Activated naive CD4-positive, alpha-beta T cell treated with anti-CD3 and anti-CD28 coated beads for 36 hours (primary cell): ENCODE measurements at regions of chr13 and their contacts with region 1.

Region 1: GRCh38 chr13:95834134-95834765 is 157.3 kb downstream of the DNAJC3 start:
- DNase-seq: peak; percentile 77
- H3K4me3 Mint-ChIP-seq: no peak overlapping the region
- H3K27ac Mint-ChIP-seq: no peak overlapping the region
- H3K4me1 Mint-ChIP-seq: no peaks in the 10 kb centered on the region
- H3K27me3 Mint-ChIP-seq: peaks cover 22% of the 10 kb centered on the region

Region 2: DNA sequence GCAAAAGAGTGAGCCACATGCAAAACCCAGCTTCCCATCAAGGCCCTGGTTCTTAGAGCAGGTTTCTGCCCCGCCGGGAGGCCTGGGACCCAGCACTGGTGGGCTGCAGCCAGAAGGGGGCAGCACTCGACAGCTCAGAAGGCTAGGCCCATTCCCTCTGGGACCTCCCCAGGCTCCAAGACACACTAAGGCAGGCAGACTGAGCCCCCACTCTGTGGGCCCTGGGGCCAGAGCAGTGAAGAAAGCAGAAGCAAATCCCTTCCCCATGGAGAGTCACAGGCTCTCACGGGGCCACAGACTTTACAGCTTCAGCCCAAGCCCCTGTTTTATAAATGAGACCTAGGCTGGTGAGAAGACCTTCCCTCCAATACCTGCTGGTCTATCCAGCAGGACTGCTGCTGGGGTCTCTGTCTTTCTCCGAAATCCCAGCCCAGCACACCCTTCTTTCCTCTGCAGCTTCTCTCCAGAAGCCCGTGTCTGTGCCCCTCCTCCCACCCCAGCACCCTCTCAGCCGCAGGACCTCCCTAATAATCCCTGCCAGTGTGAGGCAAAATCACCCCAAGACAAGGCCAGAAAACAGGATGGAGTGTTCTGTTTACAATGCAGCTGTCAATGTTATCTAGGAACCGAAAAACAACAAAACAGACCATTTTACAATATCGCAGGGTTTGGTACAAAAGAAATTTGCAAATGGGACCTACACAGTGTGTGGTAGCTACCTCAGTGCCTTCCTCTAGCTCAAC is 642.3 kb before region 1 on chr13:
- CTCF ChIA-PET with region 1: no interaction called
- intact Hi-C with region 1: loop called (anchors 1 kb)
- DNase-seq: peak; percentile 82
- H3K4me3 Mint-ChIP-seq: no peak overlapping the region
- H3K27ac Mint-ChIP-seq: no peak overlapping the region
- H3K4me1 Mint-ChIP-seq: peaks cover 5% of the 10 kb centered on the region
- H3K27me3 Mint-ChIP-seq: no peaks in the 10 kb centered on the region

Region 3: GRCh38 chr13:95480131-95480545 is 354.1 kb before region 1 on chr13:
- CTCF ChIA-PET with region 1: interaction called, 5 read pairs
- intact Hi-C with region 1: loop called (anchors 5 kb)
- DNase-seq: peak; percentile 27
- H3K4me3 Mint-ChIP-seq: no peak overlapping the region
- H3K27ac Mint-ChIP-seq: no peak overlapping the region
- H3K4me1 Mint-ChIP-seq: peaks cover 10% of the 10 kb centered on the region
- H3K27me3 Mint-ChIP-seq: peaks cover 3% of the 10 kb centered on the region

Region 4: DNA sequence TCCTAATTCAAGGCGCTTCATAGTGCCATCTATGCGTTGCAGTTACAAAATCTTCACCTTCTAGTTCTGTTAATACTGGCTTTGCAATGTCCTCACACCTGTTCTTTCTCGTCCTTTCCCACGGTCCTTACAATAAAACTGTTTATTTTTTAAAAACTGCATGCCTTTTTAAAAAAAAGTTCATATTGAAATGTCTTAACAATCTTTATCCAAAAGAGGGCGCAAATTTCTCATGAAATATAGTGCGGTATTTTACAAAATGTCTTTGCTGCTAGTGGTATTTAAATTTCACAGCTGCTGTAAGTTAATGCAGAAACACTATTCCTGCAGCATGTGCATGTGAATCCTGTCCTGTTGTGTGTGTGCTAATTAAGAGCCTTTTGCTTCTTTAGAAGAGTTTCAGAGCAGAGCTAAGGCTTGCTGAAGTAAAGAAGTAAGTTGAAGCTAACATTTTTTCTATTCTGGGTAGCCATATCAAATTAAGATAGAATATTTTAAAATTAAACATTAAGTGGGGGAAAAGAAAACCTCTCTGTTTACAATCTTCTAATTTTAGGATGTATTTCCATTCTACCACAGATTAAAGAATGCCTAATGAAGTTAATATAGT is 297.5 kb before region 1 on chr13:
- CTCF ChIA-PET with region 1: interaction called, 45 read pairs
- intact Hi-C with region 1: loop called (anchors 1 kb)
- DNase-seq: no peak
- H3K4me3 Mint-ChIP-seq: no peak overlapping the region
- H3K27ac Mint-ChIP-seq: no peak overlapping the region
- H3K4me1 Mint-ChIP-seq: peaks cover 5% of the 10 kb centered on the region
- H3K27me3 Mint-ChIP-seq: peaks cover 26% of the 10 kb centered on the region

Region 5: DNA sequence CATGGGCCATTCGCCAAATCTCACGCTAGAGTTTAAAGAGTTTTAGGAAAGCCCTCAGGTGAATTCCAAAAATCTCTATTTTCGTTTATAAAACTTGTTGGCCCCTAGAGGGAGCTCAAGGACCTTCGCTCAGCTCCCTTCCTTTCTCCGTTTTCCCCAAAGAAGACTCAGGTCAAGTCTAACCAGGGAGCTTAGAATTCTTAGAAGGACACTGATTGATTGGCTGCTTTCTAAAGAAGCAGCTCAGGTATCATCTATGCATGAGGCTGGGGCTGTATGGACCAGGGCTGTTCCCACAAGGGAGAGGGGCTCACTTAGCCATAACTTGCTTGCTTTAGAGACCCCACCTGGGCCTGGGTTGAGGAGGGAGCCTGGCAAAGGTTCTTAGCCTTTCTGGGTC is 210.2 kb before region 1 on chr13:
- CTCF ChIA-PET with region 1: interaction called, 144 read pairs
- intact Hi-C with region 1: loop called (anchors 1 kb)
- DNase-seq: peak; percentile 39
- H3K4me3 Mint-ChIP-seq: no peak overlapping the region
- H3K27ac Mint-ChIP-seq: no peak overlapping the region
- H3K4me1 Mint-ChIP-seq: no peaks in the 10 kb centered on the region
- H3K27me3 Mint-ChIP-seq: peaks cover 14% of the 10 kb centered on the region

Region 6: DNA sequence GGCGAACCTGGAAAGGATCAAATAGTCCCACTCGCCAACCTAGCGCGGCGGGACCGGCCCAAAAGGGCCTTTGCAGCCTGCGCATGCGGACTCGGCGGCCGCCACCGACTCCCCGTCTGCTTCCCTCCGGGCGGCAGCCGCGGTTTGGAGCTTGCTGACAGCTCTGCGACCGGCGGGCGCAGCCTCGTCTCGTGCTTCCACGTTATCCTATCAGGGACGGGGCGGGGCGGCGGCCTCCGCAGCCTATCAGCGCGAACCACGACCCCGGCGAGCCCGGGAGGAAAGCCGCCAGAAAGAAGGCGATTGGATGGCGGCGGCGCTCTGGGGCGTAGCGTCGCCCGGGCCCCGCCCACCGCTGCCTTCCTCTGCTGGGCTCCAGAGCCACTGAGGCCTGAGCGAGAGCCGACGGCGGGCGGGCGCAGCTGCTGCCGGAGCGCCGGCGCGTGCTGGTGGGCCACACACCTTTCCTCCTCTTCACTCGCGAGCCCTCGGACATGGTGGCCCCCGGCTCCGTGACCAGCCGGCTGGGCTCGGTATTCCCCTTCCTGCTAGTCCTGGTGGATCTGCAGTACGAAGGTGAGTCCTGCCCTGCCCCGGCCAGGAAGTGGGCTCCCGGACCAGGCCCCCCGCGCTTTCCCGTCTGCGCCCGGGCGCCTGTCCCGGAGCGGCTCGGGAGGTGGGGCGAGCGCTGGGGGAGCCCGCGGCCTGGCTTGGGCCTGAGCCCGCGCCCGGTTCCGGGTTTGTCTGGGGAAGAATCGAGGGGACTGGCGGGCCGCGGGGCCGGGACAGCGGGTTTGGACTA is 157.3 kb before region 1 on chr13 and contains the start of gene DNAJC3:
- CTCF ChIA-PET with region 1: no interaction called
- intact Hi-C with region 1: loop called (anchors 1 kb)
- DNase-seq: peak; percentile 98
- H3K4me3 Mint-ChIP-seq: peak within 1 kb of the TSS; percentile 93
- H3K27ac Mint-ChIP-seq: peak within 1 kb of the TSS; percentile 86
- H3K4me1 Mint-ChIP-seq: peaks cover 53% of the 10 kb centered on the region
- H3K27me3 Mint-ChIP-seq: no peaks in the 10 kb centered on the region
- total RNA-seq, gene DNAJC3: 13.8 to 14.0 TPM

Region 7: DNA sequence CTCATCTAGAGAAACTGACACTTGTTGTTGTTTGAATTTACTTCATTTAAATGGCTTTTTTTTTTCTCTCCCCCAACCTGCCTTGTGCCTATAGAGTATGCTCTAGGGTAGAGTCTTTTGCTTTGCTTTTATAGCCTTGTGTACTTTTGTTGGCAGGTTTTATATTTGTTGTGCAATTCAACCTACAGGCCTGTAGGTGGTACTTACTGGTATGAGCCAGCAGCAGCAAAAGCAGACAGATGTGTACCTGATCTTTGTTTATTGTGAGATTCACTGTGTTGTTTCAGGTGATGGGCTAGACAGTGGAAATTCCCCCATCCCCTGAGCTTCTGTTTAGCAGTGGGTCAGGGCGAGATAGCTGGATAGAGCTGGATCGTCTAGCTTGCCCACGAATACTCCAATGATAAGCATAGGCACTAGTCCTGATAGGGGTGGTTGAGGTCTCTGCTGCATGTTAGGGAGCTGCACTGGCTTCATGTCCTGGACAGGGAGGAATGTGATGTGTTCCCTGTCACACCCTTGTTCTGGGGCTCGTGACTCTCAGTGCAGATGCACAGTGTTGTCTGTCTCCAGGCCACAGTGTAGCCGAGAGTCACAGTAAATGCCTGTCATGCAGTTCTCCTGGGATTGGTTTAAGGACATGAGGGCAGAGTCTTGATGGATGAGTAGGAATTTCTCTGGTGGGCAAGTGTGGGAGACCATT is 136.1 kb before region 1 on chr13:
- CTCF ChIA-PET with region 1: no interaction called
- intact Hi-C with region 1: no loop called
- DNase-seq: no peak
- H3K4me3 Mint-ChIP-seq: no peak overlapping the region
- H3K27ac Mint-ChIP-seq: no peak overlapping the region
- H3K4me1 Mint-ChIP-seq: peaks cover 50% of the 10 kb centered on the region
- H3K27me3 Mint-ChIP-seq: no peaks in the 10 kb centered on the region

Region 8: DNA sequence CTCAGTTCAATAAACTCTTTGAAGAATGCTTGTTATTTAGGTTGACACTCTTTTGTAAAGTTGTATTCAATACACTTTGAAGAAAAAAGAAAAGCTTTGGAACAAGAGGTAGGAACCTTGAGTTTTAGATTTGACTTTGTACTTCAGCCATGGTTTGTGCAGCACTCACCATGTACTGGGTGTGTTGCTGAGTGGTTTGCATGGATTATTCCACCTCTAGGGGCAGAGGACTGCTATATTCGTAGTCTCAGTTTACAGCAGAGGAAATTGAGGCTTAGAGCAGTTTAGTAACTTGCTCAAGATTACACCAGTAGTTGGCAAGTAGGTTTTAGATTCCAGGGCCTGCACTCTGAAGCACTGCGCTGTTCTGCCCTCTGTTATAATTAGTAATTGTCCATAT is 88.5 kb before region 1 on chr13:
- CTCF ChIA-PET with region 1: no interaction called
- intact Hi-C with region 1: no loop called
- DNase-seq: no peak
- H3K4me3 Mint-ChIP-seq: no peak overlapping the region
- H3K27ac Mint-ChIP-seq: no peak overlapping the region
- H3K4me1 Mint-ChIP-seq: peaks cover 17% of the 10 kb centered on the region
- H3K27me3 Mint-ChIP-seq: no peaks in the 10 kb centered on the region